ENCODE measurements at regions of chr12 and their contacts with region 1.

Region 1: GRCh38 chr12:69359531-69360347 is at the start of gene YEATS4:
- DNase-seq: peak; percentile 94
- H3K4me3 ChIP-seq: peak within 1 kb of the TSS; percentile 72
- H3K27ac ChIP-seq: peak within 1 kb of the TSS; percentile 95
- H3K4me1 ChIP-seq: peaks cover 9% of the 10 kb centered on the region
- H3K27me3 ChIP-seq: no peaks in the 10 kb centered on the region
- CTCF ChIP-seq: no peak
- total RNA-seq, gene YEATS4: 43.7 and 46.3 TPM in 2 replicates

Region 2: GRCh38 chr12:68807576-68808387 is 552.0 kb before region 1 on chr12 and contains the start of gene MDM2:
- CTCF ChIA-PET with region 1: no interaction called
- POLR2A ChIA-PET with region 1: interaction called, 14 read pairs
- intact Hi-C with region 1: no loop called
- DNase-seq: peak; percentile 95
- H3K4me3 ChIP-seq: peak within 1 kb of the TSS; percentile 99
- H3K27ac ChIP-seq: peak within 1 kb of the TSS; percentile 97
- H3K4me1 ChIP-seq: no peaks in the 10 kb centered on the region
- H3K27me3 ChIP-seq: no peaks in the 10 kb centered on the region
- CTCF ChIP-seq: peak; percentile 71
- total RNA-seq, gene MDM2: 132 and 149 TPM in 2 replicates

Region 3: GRCh38 chr12:69330475-69331473 is 29.0 kb before region 1 on chr12:
- CTCF ChIA-PET with region 1: interaction called, 14 read pairs
- POLR2A ChIA-PET with region 1: no interaction called
- intact Hi-C with region 1: no loop called
- DNase-seq: no peak
- H3K4me3 ChIP-seq: peak overlapping the region; percentile 25
- H3K27ac ChIP-seq: no peak overlapping the region
- H3K4me1 ChIP-seq: peaks cover 3% of the 10 kb centered on the region
- H3K27me3 ChIP-seq: peaks cover 17% of the 10 kb centered on the region
- CTCF ChIP-seq: no peak

Region 4: GRCh38 chr12:69497308-69498026 is 137.7 kb after region 1 on chr12:
- CTCF ChIA-PET with region 1: no interaction called
- POLR2A ChIA-PET with region 1: no interaction called
- intact Hi-C with region 1: no loop called
- DNase-seq: no peak
- H3K4me3 ChIP-seq: no peak overlapping the region
- H3K27ac ChIP-seq: no peak overlapping the region
- H3K4me1 ChIP-seq: peaks cover 4% of the 10 kb centered on the region
- H3K27me3 ChIP-seq: no peaks in the 10 kb centered on the region
- CTCF ChIP-seq: no peak

Region 5: DNA sequence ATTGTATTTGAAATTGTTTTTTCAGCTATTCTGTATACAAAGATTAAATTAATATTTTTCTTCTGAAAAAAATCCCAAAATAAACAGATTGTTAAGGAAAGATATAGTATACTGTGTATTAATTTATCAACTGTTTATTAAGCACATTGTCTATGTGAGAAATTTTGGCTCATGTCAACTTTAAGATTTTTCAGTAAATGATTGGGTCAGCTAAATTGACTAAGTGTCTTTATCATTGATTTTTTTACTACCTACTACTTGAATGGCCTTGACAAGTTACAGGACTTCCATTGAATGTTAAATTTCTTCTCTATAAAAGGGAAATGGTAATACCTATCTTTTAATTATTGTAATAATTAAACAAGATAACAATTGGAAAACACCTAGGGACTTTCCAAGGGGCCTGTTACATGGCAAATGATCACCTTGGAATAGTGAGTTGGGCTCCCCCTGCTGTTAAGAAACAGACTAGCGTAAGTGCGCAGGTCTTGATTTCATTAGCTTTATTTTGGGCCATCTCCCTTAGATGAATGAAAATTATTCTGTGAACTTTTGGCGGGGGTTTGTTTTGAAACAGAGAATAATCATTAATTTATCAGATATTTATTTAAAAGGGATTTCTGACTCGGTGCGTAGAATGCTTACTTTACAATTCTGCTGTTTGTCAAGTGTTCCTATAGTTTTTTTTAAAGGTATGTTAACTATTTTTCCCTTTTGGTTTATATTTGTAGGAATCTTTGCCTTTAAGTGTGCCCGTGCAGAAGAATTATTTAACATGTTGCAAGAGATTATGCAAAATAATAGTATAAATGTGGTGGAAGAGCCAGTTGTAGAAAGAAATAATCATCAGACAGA is 211.0 kb after region 1 on chr12:
- CTCF ChIA-PET with region 1: interaction called, 16 read pairs
- POLR2A ChIA-PET with region 1: no interaction called
- intact Hi-C with region 1: loop called (anchors 10 kb)
- DNase-seq: peak; percentile 73
- H3K4me3 ChIP-seq: no peak overlapping the region
- H3K27ac ChIP-seq: no peak overlapping the region
- H3K4me1 ChIP-seq: no peaks in the 10 kb centered on the region
- H3K27me3 ChIP-seq: no peaks in the 10 kb centered on the region
- CTCF ChIP-seq: peak; percentile 92

Region 6: GRCh38 chr12:69639400-69640016 is 279.8 kb after region 1 on chr12:
- CTCF ChIA-PET with region 1: interaction called, 16 read pairs
- POLR2A ChIA-PET with region 1: no interaction called
- intact Hi-C with region 1: no loop called
- DNase-seq: peak; percentile 86
- H3K4me3 ChIP-seq: no peak overlapping the region
- H3K27ac ChIP-seq: no peak overlapping the region
- H3K4me1 ChIP-seq: no peaks in the 10 kb centered on the region
- H3K27me3 ChIP-seq: no peaks in the 10 kb centered on the region
- CTCF ChIP-seq: peak; percentile 91

Region 7: GRCh38 chr12:69676257-69677012 is 316.7 kb after region 1 on chr12:
- CTCF ChIA-PET with region 1: no interaction called
- POLR2A ChIA-PET with region 1: no interaction called
- intact Hi-C with region 1: no loop called
- DNase-seq: no peak
- H3K4me3 ChIP-seq: no peak overlapping the region
- H3K27ac ChIP-seq: no peak overlapping the region
- H3K4me1 ChIP-seq: no peaks in the 10 kb centered on the region
- H3K27me3 ChIP-seq: no peaks in the 10 kb centered on the region
- CTCF ChIP-seq: peak; percentile 35; the same call in 1 of the 2 replicates

Region 8: GRCh38 chr12:70278945-70279344 is 919.2 kb after region 1 on chr12:
- CTCF ChIA-PET with region 1: interaction called, 10 read pairs
- POLR2A ChIA-PET with region 1: no interaction called
- intact Hi-C with region 1: no loop called
- DNase-seq: no peak
- H3K4me3 ChIP-seq: no peak overlapping the region
- H3K27ac ChIP-seq: no peak overlapping the region
- H3K4me1 ChIP-seq: no peaks in the 10 kb centered on the region
- H3K27me3 ChIP-seq: no peaks in the 10 kb centered on the region
- CTCF ChIP-seq: no peak

Measured in A673 (cell line).